ENCODE measurements at regions of chr13 and their contacts with region 1.

Region 1: GRCh38 chr13:38045307-38046048 is 175.9 kb upstream of the TRPC4 start:
- DNase-seq: peak in 1 of 2 experiments; percentile 47
- H3K4me3 ChIP-seq: no peak overlapping the region
- H3K4me3 Mint-ChIP-seq: no peak overlapping the region
- H3K27ac Mint-ChIP-seq: no peak overlapping the region
- H3K4me1 ChIP-seq: no peaks in the 10 kb centered on the region
- H3K4me1 Mint-ChIP-seq: no peaks in the 10 kb centered on the region
- H3K27me3 ChIP-seq: no peaks in the 10 kb centered on the region
- H3K27me3 Mint-ChIP-seq: no peaks in the 10 kb centered on the region
- CTCF ChIP-seq: peak; percentile 56 to 85

Region 2: GRCh38 chr13:37640499-37640898 is 405.0 kb before region 1 on chr13:
- CTCF ChIA-PET with region 1: no interaction called
- POLR2A ChIA-PET with region 1: no interaction called
- intact Hi-C with region 1: loop called (anchors 5 kb)
- DNase-seq: peak in 1 of 2 experiments; percentile 10
- H3K4me3 ChIP-seq: no peak overlapping the region
- H3K4me3 Mint-ChIP-seq: no peak overlapping the region
- H3K27ac Mint-ChIP-seq: no peak overlapping the region
- H3K4me1 ChIP-seq: no peaks in the 10 kb centered on the region
- H3K4me1 Mint-ChIP-seq: no peaks in the 10 kb centered on the region
- H3K27me3 ChIP-seq: no peaks in the 10 kb centered on the region
- H3K27me3 Mint-ChIP-seq: peaks cover 21% of the 10 kb centered on the region
- CTCF ChIP-seq: peak; percentile 40 to 49

Region 3: DNA sequence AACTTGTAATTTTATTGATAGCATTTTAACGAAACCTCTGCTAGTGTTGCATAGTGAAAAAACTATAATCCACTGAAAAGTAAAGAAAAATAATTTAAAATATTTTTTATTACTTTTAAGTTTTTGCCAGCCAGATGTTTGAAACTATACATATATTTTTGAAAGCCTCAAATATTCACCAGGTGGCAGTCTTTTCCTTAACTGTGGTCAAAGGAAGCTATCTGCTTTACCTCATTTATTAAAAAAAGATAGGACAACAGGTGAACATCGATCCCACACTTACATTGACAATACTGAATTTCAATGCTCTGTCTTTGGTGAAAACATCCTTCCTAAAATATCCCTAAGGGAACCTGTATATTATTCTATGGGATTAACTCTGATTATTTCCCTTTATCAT is 276.4 kb before region 1 on chr13:
- CTCF ChIA-PET with region 1: no interaction called
- POLR2A ChIA-PET with region 1: no interaction called
- intact Hi-C with region 1: loop called (anchors 2 kb)
- DNase-seq: no peak
- H3K4me3 ChIP-seq: no peak overlapping the region
- H3K4me3 Mint-ChIP-seq: no peak overlapping the region
- H3K27ac Mint-ChIP-seq: no peak overlapping the region
- H3K4me1 ChIP-seq: no peaks in the 10 kb centered on the region
- H3K4me1 Mint-ChIP-seq: no peaks in the 10 kb centered on the region
- H3K27me3 ChIP-seq: no peaks in the 10 kb centered on the region
- H3K27me3 Mint-ChIP-seq: peaks cover 3% of the 10 kb centered on the region
- CTCF ChIP-seq: peak in 1 of 2 experiments; percentile 13

Region 4: DNA sequence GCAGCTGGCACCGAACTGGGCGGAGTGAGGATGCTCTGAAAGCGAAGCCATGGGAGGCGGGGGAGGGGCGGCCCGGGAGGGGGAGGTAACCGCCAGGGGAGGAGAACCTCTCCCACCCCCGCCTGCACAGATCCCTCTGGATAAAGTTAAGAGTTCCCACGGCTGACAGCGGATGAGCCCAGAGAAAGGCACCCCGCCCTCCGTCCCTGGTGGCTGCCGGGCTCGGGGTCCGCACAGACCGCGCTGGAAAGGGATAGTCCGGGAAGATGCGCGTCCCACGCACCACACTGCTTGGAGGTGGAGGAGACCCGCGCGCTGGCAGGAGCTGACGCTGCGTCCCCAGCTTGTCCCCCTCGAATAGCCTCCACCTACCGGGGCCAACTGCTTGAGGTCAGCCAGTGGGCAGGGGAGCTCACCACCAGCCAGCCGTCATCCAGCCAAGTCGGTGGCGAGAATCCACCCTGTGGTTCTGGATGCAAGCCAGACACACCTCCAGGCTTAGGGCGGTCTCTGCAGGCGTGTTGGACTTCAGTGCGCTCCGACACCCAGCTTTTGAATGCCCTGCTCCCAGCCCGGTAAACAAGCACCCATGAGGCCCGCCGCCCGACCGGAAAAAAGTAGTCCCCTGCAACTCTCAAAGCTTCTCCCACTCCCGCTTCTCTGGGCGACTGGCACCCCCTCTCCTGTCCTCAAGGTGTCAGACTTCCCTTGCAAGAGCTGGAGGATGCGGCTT is 175.6 kb before region 1 on chr13 and contains the start of gene TRPC4:
- CTCF ChIA-PET with region 1: no interaction called
- POLR2A ChIA-PET with region 1: no interaction called
- intact Hi-C with region 1: loop called (anchors 5 kb)
- DNase-seq: peak; percentile 42 to 46
- H3K4me3 ChIP-seq: no peak within 1 kb of the TSS
- H3K4me3 Mint-ChIP-seq: no peak within 1 kb of the TSS
- H3K27ac Mint-ChIP-seq: no peak within 1 kb of the TSS
- H3K4me1 ChIP-seq: no peaks in the 10 kb centered on the region
- H3K4me1 Mint-ChIP-seq: no peaks in the 10 kb centered on the region
- H3K27me3 ChIP-seq: no peaks in the 10 kb centered on the region; the same call in 1 of the 2 replicates
- H3K27me3 Mint-ChIP-seq: peaks cover 18% of the 10 kb centered on the region
- CTCF ChIP-seq: peak in 1 of 2 experiments; percentile 53
- total RNA-seq, gene TRPC4: not detected in 2 replicates

Region 5: DNA sequence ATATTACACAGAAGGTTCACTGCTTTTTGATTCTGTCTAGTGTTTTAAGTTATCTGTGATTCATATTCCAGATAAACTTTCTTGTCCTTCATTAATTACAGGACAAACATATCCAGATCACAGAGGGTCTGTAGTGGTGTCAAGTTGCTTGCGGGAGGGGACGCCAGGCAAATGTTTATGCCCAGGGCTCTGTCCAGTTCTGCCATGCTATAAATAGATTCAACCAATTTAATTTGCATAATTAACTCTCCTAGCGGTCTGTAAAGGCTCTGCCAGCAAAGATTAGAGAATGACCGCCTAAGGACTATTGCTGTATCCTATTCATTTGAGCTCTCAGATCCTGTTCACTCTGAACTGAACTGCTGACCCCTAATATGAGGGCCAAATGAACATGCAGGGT is 116.2 kb before region 1 on chr13:
- CTCF ChIA-PET with region 1: no interaction called
- POLR2A ChIA-PET with region 1: no interaction called
- intact Hi-C with region 1: no loop called
- DNase-seq: no peak
- H3K4me3 ChIP-seq: no peak overlapping the region
- H3K4me3 Mint-ChIP-seq: no peak overlapping the region
- H3K27ac Mint-ChIP-seq: no peak overlapping the region
- H3K4me1 ChIP-seq: no peaks in the 10 kb centered on the region
- H3K4me1 Mint-ChIP-seq: no peaks in the 10 kb centered on the region
- H3K27me3 ChIP-seq: no peaks in the 10 kb centered on the region
- H3K27me3 Mint-ChIP-seq: peaks cover 28% of the 10 kb centered on the region
- CTCF ChIP-seq: no peak

Measured in Caco-2 (cell line).